PC-9 (cell line): ENCODE measurements at regions of chr4 and their contacts with region 1.

Region 1: GRCh38 chr4:6470502-6471306 is 1.7 kb downstream of the PPP2R2C start:
- DNase-seq: peak; percentile 45 to 74
- H3K4me3 ChIP-seq: peak overlapping the region; percentile 69
- H3K27ac ChIP-seq: peak overlapping the region; percentile 69
- H3K4me1 ChIP-seq: no peaks in the 10 kb centered on the region
- H3K27me3 ChIP-seq: no peaks in the 10 kb centered on the region
- CTCF ChIP-seq: no peak

Region 2: DNA sequence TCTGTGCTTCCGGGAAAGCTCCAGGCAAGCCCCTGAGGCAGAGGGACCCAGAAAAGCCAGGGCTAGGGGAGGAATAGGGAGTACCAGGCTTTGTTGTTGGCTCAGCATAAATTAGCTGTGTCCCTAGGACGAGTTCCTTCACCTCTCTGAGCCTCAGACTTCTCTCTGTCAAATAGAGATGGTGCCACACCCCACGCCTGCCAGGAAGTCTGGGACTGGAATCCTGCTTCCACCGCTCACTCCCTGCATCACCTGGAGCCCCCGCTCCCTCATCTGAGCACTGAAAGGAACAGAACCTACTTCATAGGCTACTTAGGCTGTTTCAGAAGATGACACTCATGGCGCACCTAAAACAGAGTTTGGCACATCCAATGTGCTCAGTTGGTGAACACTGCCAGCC is 262.3 kb before region 1 on chr4:
- CTCF ChIA-PET with region 1: no interaction called
- POLR2A ChIA-PET with region 1: no interaction called
- intact Hi-C with region 1: no loop called
- DNase-seq: no peak
- H3K4me3 ChIP-seq: no peak overlapping the region
- H3K27ac ChIP-seq: no peak overlapping the region
- H3K4me1 ChIP-seq: no peaks in the 10 kb centered on the region
- H3K27me3 ChIP-seq: peaks cover 50% of the 10 kb centered on the region
- CTCF ChIP-seq: no peak

Region 3: DNA sequence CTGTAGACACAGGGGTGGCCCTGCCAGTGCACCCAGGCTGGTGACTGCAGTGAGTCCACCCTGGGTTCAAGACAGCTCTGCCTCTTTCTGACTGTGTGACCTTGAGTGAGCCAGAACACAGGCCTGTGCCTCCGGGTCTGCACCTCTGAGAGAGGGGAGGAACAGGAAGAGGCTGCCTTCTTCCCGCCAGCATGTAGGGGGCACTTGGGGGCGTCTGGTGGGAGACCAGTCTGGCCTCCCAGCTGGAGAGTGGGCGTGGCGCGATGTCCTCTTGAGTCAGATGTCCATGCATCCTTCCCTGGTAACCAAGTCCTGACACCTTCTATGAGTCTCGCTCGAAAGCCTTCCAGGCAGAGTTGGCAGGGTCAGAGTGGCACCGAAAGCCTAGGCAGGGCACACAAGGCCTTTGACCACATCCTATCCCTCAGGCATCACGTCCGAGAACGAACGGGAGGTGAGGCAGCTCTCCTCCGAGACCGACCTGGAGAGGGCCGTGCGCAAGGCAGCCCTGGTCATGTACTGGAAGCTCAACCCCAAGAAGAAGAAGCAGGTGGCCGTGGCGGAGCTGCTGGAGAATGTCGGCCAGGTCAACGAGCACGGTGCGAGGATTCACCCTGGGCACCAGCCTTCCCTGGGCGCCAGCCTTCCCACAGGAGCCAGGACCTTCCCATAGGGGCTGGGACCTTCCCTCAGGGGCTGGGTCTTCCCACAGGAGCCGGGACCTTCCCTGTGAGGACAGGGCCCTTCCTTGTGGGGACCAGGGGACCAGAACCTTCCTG is 179.7 kb before region 1 on chr4:
- CTCF ChIA-PET with region 1: no interaction called
- POLR2A ChIA-PET with region 1: no interaction called
- intact Hi-C with region 1: no loop called
- DNase-seq: no peak
- H3K4me3 ChIP-seq: no peak overlapping the region
- H3K27ac ChIP-seq: no peak overlapping the region
- H3K4me1 ChIP-seq: no peaks in the 10 kb centered on the region
- H3K27me3 ChIP-seq: no peaks in the 10 kb centered on the region
- CTCF ChIP-seq: no peak

Region 4: DNA sequence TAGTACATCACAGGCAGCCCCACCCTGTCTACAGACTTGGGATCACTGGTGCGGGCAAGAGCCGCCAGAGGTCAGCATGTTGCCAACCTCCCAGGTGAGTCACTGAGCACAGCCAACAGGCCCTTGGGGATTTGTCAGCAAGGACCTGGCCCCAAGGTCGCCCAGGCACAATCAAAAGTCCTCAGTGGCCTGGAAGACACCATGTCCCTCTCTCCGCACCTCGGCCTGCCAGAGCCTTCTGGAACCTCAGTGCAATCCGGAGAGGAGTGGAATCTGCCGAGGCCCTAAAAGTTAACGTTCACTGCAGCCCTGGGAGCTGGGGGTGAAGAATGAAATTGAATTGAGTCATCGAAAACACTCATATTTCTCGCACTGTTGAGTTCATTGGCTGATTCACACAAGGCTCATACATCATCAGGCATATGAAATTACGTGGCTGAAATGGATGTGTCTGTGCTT is 126.7 kb before region 1 on chr4:
- CTCF ChIA-PET with region 1: no interaction called
- POLR2A ChIA-PET with region 1: no interaction called
- intact Hi-C with region 1: loop called (anchors 5 kb)
- DNase-seq: peak; percentile 74 to 84
- H3K4me3 ChIP-seq: peak overlapping the region; percentile 15; the same call in 1 of the 2 replicates
- H3K27ac ChIP-seq: peak overlapping the region; percentile 46
- H3K4me1 ChIP-seq: peaks cover 18% of the 10 kb centered on the region
- H3K27me3 ChIP-seq: no peaks in the 10 kb centered on the region
- CTCF ChIP-seq: no peak; the same call in 1 of the 2 replicates

Region 5: GRCh38 chr4:6390356-6390755 is 80.3 kb before region 1 on chr4:
- CTCF ChIA-PET with region 1: no interaction called
- POLR2A ChIA-PET with region 1: no interaction called
- intact Hi-C with region 1: loop called (anchors 5 kb)
- DNase-seq: no peak
- H3K4me3 ChIP-seq: no peak overlapping the region
- H3K27ac ChIP-seq: peak overlapping the region; percentile 88; the same call in 1 of the 2 replicates
- H3K4me1 ChIP-seq: peaks cover 26% of the 10 kb centered on the region
- H3K27me3 ChIP-seq: no peaks in the 10 kb centered on the region
- CTCF ChIP-seq: no peak

Region 6: GRCh38 chr4:6523251-6523650 is 52.5 kb after region 1 on chr4:
- CTCF ChIA-PET with region 1: interaction called, 7 read pairs
- POLR2A ChIA-PET with region 1: no interaction called
- intact Hi-C with region 1: loop called (anchors 5 kb)
- DNase-seq: peak in 1 of 2 experiments; percentile 50
- H3K4me3 ChIP-seq: no peak overlapping the region
- H3K27ac ChIP-seq: no peak overlapping the region
- H3K4me1 ChIP-seq: no peaks in the 10 kb centered on the region; the same call in 1 of the 2 replicates
- H3K27me3 ChIP-seq: no peaks in the 10 kb centered on the region
- CTCF ChIP-seq: no peak

Region 7: GRCh38 chr4:7058792-7059191 is 588.1 kb after region 1 on chr4:
- CTCF ChIA-PET with region 1: no interaction called
- POLR2A ChIA-PET with region 1: no interaction called
- intact Hi-C with region 1: no loop called
- DNase-seq: no peak
- H3K4me3 ChIP-seq: no peak overlapping the region
- H3K27ac ChIP-seq: no peak overlapping the region
- H3K4me1 ChIP-seq: no peaks in the 10 kb centered on the region
- H3K27me3 ChIP-seq: no peaks in the 10 kb centered on the region
- CTCF ChIP-seq: no peak